ENCODE measurements at regions of chr2 and their contacts with region 1.

Region 1: DNA sequence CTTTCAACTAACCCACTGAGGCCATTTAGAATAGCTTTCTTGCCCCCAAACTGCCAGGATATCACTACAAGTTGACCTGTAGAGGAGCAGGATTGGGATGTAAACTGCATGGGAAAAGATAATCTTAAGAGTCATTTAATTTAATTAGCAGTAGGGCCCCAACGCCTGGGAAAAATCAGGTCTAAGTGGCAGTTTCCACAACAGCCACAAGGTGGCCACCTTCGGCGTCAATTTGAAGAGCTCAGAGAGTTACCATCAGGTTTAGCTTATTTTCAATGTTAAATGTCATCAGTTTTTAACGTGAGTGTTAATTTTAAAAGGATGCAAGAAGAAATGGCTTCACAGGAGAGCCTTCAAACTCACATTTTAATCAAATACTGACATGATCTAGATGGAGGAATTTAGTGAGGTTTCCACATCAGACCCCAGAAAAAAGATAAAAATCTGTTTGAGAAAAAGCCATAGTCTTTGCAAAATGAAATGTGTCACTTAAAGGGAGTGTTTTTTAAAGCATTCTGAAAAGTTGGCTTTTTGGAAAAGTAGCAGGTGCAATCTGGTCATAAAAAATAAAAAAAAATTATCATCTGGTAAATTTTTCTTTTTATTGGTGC is 77.3 kb upstream of the UPP2 start:
- DNase-seq: no peak
- ATAC-seq: peak in 1 of 2 donors; percentile 66
- H3K4me3 ChIP-seq: no peak overlapping the region
- H3K27ac ChIP-seq: no peak overlapping the region
- H3K4me1 ChIP-seq: no peaks in the 10 kb centered on the region
- H3K27me3 ChIP-seq: no peaks in the 10 kb centered on the region
- CTCF ChIP-seq: peak; percentile 41 to 81 (median 56)
- POLR2A ChIP-seq: no peak

Region 2: GRCh38 chr2:157302492-157303099 is 721.8 kb before region 1 on chr2:
- in situ Hi-C with region 1: loop called in 1 of 4 experiments (anchors 25 kb)
- intact Hi-C with region 1: no loop called
- DNase-seq: no peak
- ATAC-seq: peak in 1 of 2 donors; percentile 69
- H3K4me3 ChIP-seq: no peak overlapping the region
- H3K27ac ChIP-seq: no peak overlapping the region
- H3K4me1 ChIP-seq: no peaks in the 10 kb centered on the region
- H3K27me3 ChIP-seq: no peaks in the 10 kb centered on the region
- CTCF ChIP-seq: peak in 2 of 5 experiments; percentile 61 to 69
- POLR2A ChIP-seq: no peak

Region 3: DNA sequence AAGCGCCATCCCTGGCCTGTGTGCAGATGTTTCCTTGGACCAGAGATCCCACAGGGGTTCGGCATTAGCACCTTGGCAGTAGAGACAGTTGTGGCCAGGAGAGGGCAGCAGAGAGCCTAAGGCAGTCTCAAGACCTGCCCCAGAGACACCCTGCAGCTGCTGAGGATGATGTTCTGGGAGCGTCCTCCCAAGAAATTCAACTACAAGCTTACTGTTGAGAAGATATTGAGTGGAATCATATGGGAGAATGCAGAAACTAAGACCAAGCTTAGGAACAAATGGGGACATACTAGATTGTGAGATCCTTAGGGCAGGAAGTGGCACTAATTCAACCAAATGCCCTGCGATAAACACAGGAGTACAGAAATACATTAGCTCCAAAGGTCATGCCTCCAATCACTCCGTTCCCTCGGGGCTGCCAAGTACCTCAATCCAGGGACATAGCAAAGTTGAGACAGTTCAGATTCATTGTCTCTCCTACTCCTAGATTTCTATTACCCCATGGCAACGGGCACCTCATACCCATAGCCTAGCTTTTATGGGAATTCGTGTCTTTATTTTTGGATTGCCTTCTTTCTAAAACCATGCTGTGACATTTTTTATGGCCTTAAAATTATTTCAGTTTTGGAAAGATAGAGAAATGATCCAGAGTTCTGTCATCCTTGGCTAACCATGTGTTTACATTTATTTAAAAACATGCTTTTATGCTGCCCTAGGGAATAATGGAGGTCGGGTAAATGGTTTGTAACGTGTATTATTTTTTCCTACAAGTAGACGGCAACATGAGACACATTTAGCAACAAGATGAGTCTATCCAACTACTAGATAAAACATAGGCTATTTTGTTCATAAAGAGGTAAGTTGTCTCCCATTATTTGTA is 696.5 kb before region 1 on chr2:
- in situ Hi-C with region 1: loop called in 3 of 4 experiments (anchors 25 kb)
- intact Hi-C with region 1: no loop called
- DNase-seq: peak; percentile 46 to 54
- ATAC-seq: peak; percentile 64 to 75
- H3K4me3 ChIP-seq: no peak overlapping the region
- H3K27ac ChIP-seq: no peak overlapping the region
- H3K4me1 ChIP-seq: no peaks in the 10 kb centered on the region
- H3K27me3 ChIP-seq: no peaks in the 10 kb centered on the region
- CTCF ChIP-seq: peak; percentile 18 to 82 (median 58)
- POLR2A ChIP-seq: no peak

Region 4: GRCh38 chr2:157971697-157972096 is 52.7 kb before region 1 on chr2:
- in situ Hi-C with region 1: no loop called
- intact Hi-C with region 1: no loop called
- DNase-seq: no peak
- ATAC-seq: no peak
- H3K4me3 ChIP-seq: no peak overlapping the region
- H3K27ac ChIP-seq: no peak overlapping the region
- H3K4me1 ChIP-seq: no peaks in the 10 kb centered on the region
- H3K27me3 ChIP-seq: no peaks in the 10 kb centered on the region
- CTCF ChIP-seq: no peak
- POLR2A ChIP-seq: no peak

Region 5: DNA sequence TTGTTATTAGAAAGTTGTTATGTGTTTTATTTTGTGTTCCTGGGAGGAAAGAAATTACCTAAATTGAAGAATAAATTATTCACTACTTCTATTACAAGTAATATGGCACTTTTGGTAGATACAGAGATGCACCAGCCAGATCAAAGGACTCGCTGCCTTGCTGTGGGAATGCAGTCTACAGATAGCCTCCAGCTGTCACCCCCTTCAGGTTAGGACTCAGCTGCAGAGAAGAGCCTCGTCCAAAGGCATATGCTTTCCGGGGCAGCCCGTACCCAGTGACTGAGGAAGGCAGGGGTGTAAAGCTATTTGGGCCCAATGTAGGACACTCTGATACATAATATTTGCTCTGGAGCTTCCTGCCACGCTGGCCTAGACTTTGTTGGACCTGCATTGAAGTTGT is 341.9 kb after region 1 on chr2:
- in situ Hi-C with region 1: no loop called
- intact Hi-C with region 1: no loop called
- DNase-seq: no peak
- ATAC-seq: no peak
- H3K4me3 ChIP-seq: no peak overlapping the region
- H3K27ac ChIP-seq: no peak overlapping the region
- H3K4me1 ChIP-seq: no peaks in the 10 kb centered on the region
- H3K27me3 ChIP-seq: no peaks in the 10 kb centered on the region
- CTCF ChIP-seq: no peak
- POLR2A ChIP-seq: no peak

Region 6: DNA sequence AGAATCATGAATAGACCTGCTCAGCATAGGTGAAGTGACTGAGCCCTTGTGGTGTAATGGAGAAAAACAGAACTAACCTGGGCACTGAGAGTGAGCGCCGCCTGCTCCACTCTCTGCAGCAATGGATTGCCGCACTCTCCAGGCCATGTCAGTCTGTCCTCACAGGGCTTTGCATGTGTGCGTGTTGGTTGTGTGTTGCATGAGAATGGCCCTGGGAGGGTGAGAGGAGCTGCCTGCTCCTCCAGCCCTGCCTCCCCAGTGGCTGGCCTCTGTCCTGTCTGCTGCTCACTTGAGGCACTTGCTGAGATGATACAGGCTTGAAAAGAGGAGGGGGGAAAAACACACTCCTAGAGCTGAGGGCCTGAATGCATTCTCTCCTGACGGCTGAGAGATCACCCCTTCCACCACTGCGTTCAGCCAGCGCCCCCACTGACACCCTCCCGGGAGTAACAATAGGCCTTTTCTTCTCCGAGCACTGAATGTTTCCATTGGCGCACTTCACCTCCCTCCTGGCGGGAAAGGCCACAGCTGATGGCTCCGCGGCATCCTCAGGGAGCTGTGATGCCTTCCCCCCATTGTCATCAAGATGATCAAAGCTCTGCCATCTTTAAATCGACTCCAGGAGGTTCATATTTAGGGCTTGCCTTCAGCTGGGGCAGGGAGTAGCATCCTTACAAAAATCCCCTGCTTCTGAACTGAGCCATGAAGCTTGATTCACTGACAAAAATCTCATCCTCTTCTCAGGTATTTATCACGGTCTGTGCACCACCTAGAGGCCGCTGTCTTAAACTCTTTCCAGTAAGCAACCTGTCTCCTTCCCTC is 720.9 kb after region 1 on chr2:
- in situ Hi-C with region 1: loop called in 2 of 4 experiments (anchors 10 kb)
- intact Hi-C with region 1: no loop called
- DNase-seq: no peak
- ATAC-seq: peak in 1 of 2 donors; percentile 45
- H3K4me3 ChIP-seq: no peak overlapping the region
- H3K27ac ChIP-seq: no peak overlapping the region
- H3K4me1 ChIP-seq: peaks cover 2 to 11% of the 10 kb centered on the region in 2 donors
- H3K27me3 ChIP-seq: no peaks in the 10 kb centered on the region
- CTCF ChIP-seq: peak in 2 of 5 experiments; percentile 26 to 31
- POLR2A ChIP-seq: no peak

Region 7: DNA sequence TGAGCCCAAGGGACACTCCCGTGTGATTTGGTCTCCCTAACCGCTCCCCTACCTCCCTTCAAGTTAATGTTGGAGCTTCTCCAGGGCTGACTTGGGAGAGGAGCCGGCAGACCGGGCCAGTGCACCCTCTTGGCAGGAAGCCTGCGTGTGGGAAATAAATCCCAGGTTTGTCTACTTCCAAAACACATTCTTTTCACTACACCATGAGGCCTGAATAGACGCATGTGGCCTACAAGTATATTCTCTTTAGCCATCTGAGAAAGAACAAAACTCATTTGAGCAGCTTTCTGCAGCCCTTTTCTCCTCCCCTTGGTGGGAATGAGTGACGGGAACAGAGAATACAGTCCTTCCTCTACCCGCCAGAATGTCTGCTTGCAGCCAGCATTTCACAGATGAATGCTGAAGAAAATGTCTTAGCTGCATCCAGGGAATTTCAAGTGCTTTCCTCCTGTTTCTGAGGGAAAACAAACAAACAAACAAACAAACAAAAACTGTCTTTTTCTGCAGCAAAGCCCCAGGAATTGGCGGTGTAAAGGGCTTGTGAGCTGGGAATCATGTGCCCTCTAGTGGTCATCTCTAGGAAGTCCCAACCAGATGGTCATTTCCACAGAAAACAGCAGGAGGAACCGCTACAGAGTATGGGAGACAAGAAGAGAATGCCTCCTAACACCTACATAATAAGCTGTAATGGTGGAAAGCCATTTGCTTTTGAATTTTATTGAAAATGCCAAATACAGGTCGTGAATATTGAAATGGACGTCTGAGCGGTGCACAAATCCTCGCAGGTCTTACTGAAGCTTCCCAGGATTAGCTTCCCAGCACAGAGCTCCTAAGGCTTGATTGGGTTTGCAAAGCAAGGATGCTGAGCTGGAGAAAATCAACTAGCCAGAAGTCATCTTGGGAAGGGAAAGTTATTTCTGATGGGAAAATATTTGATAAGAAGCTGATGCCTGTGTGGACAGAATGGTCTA is 729.5 kb after region 1 on chr2:
- in situ Hi-C with region 1: loop called in 2 of 4 experiments (anchors 10 kb)
- intact Hi-C with region 1: loop called (anchors 2 kb)
- DNase-seq: no peak
- ATAC-seq: peak; percentile 88 to 91
- H3K4me3 ChIP-seq: peak overlapping the region; percentile 37 to 46 (median 42)
- H3K27ac ChIP-seq: no peak overlapping the region
- H3K4me1 ChIP-seq: peaks cover 4% of the 10 kb centered on the region in 2 donors
- H3K27me3 ChIP-seq: no peaks in the 10 kb centered on the region
- CTCF ChIP-seq: peak; percentile 74 to 89 (median 77)
- POLR2A ChIP-seq: no peak

Measured in gastrocnemius medialis (tissue), 4 donors.